ENCODE measurements at regions of chr12 and their contacts with region 1.

Region 1: DNA sequence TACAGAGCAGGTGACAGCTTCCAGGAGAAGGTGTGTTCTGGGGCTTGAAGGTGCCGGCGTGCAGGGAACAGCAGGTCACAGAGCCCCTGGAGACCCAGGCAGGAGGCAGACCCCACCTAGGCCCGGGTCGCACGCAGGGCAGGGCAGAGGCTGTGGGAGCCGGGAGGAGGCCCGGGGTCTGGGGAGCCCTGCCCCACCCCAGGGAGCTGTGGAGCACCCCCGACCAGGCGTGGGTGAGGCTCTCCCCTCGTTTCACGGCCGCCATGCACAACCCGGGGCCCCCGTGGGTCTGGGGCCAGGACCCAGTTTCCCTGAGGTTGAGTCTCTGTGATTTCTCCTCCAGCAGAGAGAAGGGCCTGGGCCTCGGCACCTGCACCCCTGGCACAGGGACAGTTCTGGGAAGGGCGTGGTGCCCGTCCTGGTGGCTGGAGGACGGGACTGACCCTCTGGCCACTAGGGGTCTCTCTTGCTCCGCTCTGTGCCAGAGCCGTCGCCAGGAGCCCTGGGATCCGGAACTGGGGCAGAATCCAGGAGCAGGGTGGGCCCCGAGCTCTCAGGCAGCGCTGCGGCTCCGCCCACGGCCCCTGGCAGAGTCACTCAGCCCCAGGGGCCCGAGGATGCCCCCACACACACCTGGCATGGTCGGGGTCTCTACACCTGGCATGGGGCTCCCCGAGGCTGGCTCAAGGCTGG is 75.2 kb upstream of the FBRSL1 start:
- DNase-seq: peak in 1 of 2 experiments; percentile 93
- H3K4me3 ChIP-seq: no peak overlapping the region
- H3K27ac ChIP-seq: no peak overlapping the region
- H3K4me1 ChIP-seq: peaks cover 0 to 2% (median 0%) of the 10 kb centered on the region in 4 experiments; a peak in 2 of 7 replicates
- H3K27me3 ChIP-seq: peaks cover 11 to 41% (median 33%) of the 10 kb centered on the region in 4 experiments; a peak in 6 of 7 replicates
- CTCF ChIP-seq: peak in 2 of 3 experiments; percentile 92 to 96; a peak in 3 of 4 replicates
- EP300 ChIP-seq: no peak
- POLR2A ChIP-seq: no peak
- RAD21 ChIP-seq: peak; percentile 97 to 99

Region 2: DNA sequence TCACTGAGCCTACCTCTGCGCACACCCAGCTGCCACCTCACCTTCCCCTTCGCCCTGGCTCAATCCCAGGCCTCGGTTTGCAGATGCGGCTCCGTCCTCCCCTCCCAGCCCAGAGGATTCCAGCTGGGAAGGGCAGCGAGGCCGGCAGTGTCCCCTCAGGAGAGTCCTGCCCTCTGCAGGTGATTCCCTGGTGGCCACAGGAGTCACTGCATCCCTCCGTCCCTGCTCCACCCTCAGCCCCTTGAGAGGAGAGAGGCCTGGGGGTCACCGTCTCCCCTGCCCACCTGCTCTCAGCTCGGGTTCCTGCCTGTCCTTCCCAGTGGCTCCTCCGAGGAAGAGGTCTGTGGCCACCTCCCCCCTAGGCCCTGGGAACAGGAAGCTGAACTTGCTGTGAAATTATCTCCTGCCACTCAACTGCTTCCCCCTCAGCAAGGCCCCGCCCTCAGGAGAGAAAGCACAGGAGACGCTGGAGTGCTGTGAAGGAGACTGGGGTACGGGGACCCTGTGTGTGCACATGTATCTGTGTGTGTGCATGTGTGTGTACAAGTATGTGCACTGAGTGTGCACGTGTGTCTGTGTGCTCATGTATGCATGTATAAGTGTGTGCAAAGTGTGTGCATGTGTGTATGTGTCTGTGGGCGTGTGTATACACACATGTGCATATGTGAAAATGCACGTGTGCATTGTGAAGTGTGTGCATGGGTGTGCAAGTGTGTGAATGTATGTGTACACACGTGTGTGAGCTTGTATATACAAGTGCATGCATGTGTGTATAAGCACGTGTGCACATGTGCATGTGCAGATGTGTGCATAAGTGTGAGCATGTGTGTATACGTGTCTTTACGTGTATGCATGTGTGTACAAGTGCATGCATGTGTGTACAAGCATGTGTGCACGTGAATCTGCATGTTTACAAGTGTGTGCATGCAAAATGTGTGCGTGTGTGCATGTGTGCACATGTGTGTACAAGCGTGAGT is 72.2 kb before region 1 on chr12:
- CTCF ChIA-PET with region 1: interaction called, 23 read pairs
- POLR2A ChIA-PET with region 1: no interaction called
- DNase-seq: peak in 1 of 2 experiments; percentile 76
- H3K4me3 ChIP-seq: no peak overlapping the region
- H3K27ac ChIP-seq: no peak overlapping the region
- H3K4me1 ChIP-seq: peaks cover 0 to 2% (median 2%) of the 10 kb centered on the region in 4 experiments; a peak in 3 of 7 replicates
- H3K27me3 ChIP-seq: peaks cover 1 to 25% (median 12%) of the 10 kb centered on the region in 4 experiments
- CTCF ChIP-seq: peak in 2 of 3 experiments; percentile 93 to 99; a peak in 3 of 4 replicates
- EP300 ChIP-seq: no peak
- POLR2A ChIP-seq: no peak
- RAD21 ChIP-seq: peak; percentile 59 to 72

Region 3: GRCh38 chr12:132393991-132394949 is 20.5 kb before region 1 on chr12:
- CTCF ChIA-PET with region 1: interaction called, 23 read pairs
- POLR2A ChIA-PET with region 1: no interaction called
- DNase-seq: no peak
- H3K4me3 ChIP-seq: no peak overlapping the region
- H3K27ac ChIP-seq: no peak overlapping the region
- H3K4me1 ChIP-seq: peaks cover 0 to 24% (median 17%) of the 10 kb centered on the region in 4 experiments; a peak in 6 of 7 replicates
- H3K27me3 ChIP-seq: peaks cover 0 to 30% (median 20%) of the 10 kb centered on the region in 4 experiments; a peak in 6 of 7 replicates
- CTCF ChIP-seq: no peak
- EP300 ChIP-seq: no peak
- POLR2A ChIP-seq: no peak
- RAD21 ChIP-seq: no peak

Region 4: GRCh38 chr12:132518354-132518941 is 103.7 kb after region 1 on chr12:
- CTCF ChIA-PET with region 1: interaction called, 83 read pairs
- POLR2A ChIA-PET with region 1: no interaction called
- DNase-seq: no peak
- H3K4me3 ChIP-seq: no peak overlapping the region
- H3K27ac ChIP-seq: no peak overlapping the region
- H3K4me1 ChIP-seq: no peaks in the 10 kb centered on the region; a peak in 1 of 7 replicates
- H3K27me3 ChIP-seq: peaks cover 0 to 36% (median 26%) of the 10 kb centered on the region in 4 experiments; a peak in 6 of 7 replicates
- CTCF ChIP-seq: no peak
- EP300 ChIP-seq: no peak
- POLR2A ChIP-seq: no peak
- RAD21 ChIP-seq: no peak

Region 5: DNA sequence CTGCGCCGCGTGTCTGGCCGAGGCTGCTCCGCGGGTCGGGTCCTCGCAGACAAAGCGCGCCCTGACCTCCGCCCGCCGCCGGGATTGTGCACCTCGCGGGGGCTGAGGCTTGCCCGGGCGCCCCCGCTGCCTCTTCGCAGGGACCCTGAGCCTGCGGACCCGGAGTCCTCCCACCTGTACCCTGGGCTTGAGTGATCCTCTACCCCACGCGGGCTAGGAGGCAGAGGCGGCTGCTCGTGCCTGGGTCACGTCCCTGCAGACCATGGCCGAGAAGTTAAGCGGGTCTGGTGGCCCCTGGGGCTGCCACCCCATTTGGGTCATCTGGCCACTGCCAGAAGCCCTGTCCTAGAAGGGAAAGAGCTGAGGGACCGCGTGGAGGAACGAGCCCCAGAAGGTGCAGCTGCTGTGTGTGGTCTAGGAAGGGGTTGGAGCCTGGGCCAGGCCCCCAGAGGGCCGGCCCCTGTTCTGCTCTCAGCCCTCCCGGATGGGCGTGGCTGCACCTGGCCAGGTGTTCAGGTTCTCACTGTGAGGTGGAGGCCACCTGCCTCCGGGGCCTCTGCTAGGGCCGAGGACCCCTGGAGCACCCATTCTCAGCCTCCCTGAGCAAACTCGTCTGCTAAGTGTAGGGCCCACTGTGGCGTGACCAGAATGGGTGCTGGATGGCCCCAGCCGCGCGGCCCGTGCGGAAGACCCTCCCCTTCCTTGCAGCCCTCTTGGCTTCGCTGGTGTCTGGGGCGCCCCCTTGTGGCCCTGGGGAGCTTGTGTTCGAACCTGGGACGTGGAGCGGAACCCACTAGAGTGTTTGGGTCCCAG is 146.0 kb after region 1 on chr12:
- CTCF ChIA-PET with region 1: interaction called, 22 read pairs
- POLR2A ChIA-PET with region 1: interaction called, 4 read pairs
- DNase-seq: peak; percentile 60 to 96
- H3K4me3 ChIP-seq: peak overlapping the region; percentile 79 to 94 (median 90)
- H3K27ac ChIP-seq: peak overlapping the region; percentile 74; the same call in 1 of the 2 replicates
- H3K4me1 ChIP-seq: peaks cover 0 to 10% (median 6%) of the 10 kb centered on the region in 4 experiments; a peak in 5 of 7 replicates
- H3K27me3 ChIP-seq: peaks cover 8 to 39% (median 32%) of the 10 kb centered on the region in 4 experiments
- CTCF ChIP-seq: peak in 2 of 3 experiments; percentile 88 to 91; a peak in 3 of 4 replicates
- EP300 ChIP-seq: no peak
- POLR2A ChIP-seq: peak in 1 of 2 experiments; percentile 63; a peak in 2 of 3 replicates
- RAD21 ChIP-seq: peak; percentile 34 to 53; a peak in 3 of 4 replicates